HEK293 (cell line): ENCODE measurements at regions of chr7 and their contacts with region 1.

Region 1: GRCh38 chr7:134140889-134141867 is 14.0 kb downstream of the LRGUK start:
- H3K4me3 ChIP-seq: no peak overlapping the region
- H3K27ac ChIP-seq: no peak overlapping the region
- H3K4me1 ChIP-seq: no peaks in the 10 kb centered on the region
- CTCF ChIP-seq: peak; percentile 56; the same call in 1 of the 2 replicates

Region 2: DNA sequence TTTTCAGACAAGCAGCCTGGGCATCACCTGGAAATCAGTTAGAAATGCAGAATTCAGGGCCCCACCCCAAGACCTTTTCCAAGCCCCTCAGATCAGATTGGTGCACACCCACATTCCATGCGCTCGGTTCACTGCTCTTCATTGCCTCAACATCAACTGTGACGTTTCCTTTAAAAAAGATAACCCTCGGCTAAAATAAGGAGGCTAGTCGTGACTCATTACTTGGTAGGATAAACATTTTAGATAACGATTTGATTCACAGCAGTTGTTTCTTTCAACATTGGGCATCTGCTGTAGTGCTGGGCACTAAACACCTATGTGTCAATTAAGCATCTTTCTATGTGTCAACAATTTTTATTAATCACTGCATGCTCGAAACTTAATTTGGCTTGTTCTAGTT is 205.1 kb before region 1 on chr7:
- CTCF ChIA-PET with region 1: no interaction called
- POLR2A ChIA-PET with region 1: no interaction called
- H3K4me3 ChIP-seq: no peak overlapping the region
- H3K27ac ChIP-seq: no peak overlapping the region; the same call in 1 of the 2 replicates
- H3K4me1 ChIP-seq: peaks cover 27% of the 10 kb centered on the region
- CTCF ChIP-seq: no peak

Region 3: GRCh38 chr7:133957845-133958244 is 183.3 kb before region 1 on chr7:
- CTCF ChIA-PET with region 1: no interaction called
- POLR2A ChIA-PET with region 1: no interaction called
- H3K4me3 ChIP-seq: no peak overlapping the region
- H3K27ac ChIP-seq: no peak overlapping the region
- H3K4me1 ChIP-seq: no peaks in the 10 kb centered on the region
- CTCF ChIP-seq: no peak

Region 4: DNA sequence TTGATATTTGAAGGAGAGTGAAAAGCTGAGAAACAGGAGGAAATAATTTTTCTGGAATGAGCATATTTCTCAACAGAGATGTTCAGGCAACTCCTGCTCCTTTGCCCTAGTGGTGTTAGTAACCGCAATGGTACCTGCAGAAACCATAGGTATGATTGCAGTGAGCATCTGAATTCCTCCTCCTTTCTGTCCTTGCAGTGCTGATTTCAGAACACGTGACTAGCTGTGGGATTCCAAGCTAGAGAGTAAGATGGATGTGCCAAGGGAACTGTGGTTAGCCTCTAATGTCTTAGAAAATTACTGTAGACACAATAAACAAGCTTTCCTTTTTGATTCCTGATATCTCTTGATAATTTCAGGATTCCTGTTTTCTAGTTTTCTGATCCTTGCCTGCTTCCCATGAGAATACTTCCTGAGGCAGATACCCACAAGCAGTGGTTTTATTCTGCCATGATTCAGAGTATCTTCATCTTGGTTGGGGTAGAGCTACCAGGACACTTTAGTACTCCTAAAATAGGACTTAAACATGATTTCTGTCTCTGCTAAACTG is 13.5 kb after region 1 on chr7:
- CTCF ChIA-PET with region 1: interaction called, 13 read pairs
- POLR2A ChIA-PET with region 1: interaction called, 4 read pairs
- H3K4me3 ChIP-seq: no peak overlapping the region
- H3K27ac ChIP-seq: no peak overlapping the region
- H3K4me1 ChIP-seq: no peaks in the 10 kb centered on the region
- CTCF ChIP-seq: no peak

Region 5: GRCh38 chr7:134420424-134421125 is 279.4 kb after region 1 on chr7:
- CTCF ChIA-PET with region 1: interaction called, 15 read pairs
- POLR2A ChIA-PET with region 1: no interaction called
- H3K4me3 ChIP-seq: no peak overlapping the region
- H3K27ac ChIP-seq: no peak overlapping the region
- H3K4me1 ChIP-seq: no peaks in the 10 kb centered on the region
- CTCF ChIP-seq: peak; percentile 54; the same call in 1 of the 2 replicates